ENCODE measurements at regions of chr15 and their contacts with region 1.

Region 1: DNA sequence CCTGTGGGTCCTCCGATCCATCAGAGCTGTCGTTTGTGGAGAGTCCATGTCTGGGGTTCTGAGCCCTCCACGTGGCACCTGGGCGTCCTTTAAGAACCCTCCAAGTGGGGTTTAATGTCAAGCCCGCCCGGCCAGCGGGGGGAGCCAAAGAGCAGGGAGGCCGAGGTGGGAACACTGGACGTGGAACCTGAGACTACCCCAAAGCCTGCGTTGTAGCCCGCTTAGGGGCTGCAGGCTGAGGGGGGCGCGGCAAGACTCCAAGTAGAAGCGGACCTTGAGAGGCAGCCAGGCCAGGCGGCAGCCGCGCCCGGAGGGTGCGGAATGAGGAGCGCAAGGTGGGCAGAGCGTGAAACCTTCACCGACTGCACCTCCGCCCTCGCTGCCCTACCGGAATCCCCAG is 126.2 kb upstream of the ATP10A start:
- DNase-seq: no peak
- ATAC-seq: no peak
- H3K4me3 ChIP-seq: no peak overlapping the region
- H3K27ac ChIP-seq: no peak overlapping the region
- H3K4me1 ChIP-seq: no peaks in the 10 kb centered on the region
- H3K27me3 ChIP-seq: no peaks in the 10 kb centered on the region
- CTCF ChIP-seq: no peak
- EP300 ChIP-seq: no peak
- POLR2A ChIP-seq: no peak
- RAD21 ChIP-seq: no peak

Region 2: DNA sequence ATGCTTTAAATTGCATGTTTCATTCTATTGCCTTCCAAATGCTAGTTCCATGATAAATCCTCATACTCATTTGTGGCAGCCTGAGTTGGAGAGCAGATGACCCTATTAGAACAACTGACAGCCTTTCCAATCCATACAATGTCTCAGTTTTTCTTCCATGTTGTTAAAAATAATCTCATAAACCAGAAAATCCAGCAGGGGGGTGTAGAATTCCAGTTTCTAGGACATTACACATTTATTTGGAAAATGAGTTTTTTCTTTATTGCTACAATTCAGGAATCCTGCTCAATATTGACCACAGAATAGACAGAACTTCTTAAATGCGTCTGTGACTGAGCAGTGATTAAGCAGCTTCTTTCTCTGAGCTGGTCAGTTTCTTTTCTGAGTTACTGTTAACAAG is 48.0 kb after region 1 on chr15:
- CTCF ChIA-PET with region 1: no interaction called
- POLR2A ChIA-PET with region 1: no interaction called
- RAD21 ChIA-PET with region 1: no interaction called
- SMC1A ChIA-PET with region 1: no interaction called
- in situ Hi-C with region 1: loop called (anchors 5 kb)
- intact Hi-C with region 1: no loop called
- DNase-seq: no peak
- ATAC-seq: no peak
- H3K4me3 ChIP-seq: no peak overlapping the region
- H3K27ac ChIP-seq: no peak overlapping the region
- H3K4me1 ChIP-seq: no peaks in the 10 kb centered on the region
- H3K27me3 ChIP-seq: no peaks in the 10 kb centered on the region
- CTCF ChIP-seq: no peak
- EP300 ChIP-seq: no peak
- POLR2A ChIP-seq: no peak
- RAD21 ChIP-seq: no peak

Measured in GM12878 (cell line).